Naive thymus-derived CD8-positive, alpha-beta T cell (primary cell): ENCODE measurements at regions of chr1 and their contacts with region 1.

Region 1: DNA sequence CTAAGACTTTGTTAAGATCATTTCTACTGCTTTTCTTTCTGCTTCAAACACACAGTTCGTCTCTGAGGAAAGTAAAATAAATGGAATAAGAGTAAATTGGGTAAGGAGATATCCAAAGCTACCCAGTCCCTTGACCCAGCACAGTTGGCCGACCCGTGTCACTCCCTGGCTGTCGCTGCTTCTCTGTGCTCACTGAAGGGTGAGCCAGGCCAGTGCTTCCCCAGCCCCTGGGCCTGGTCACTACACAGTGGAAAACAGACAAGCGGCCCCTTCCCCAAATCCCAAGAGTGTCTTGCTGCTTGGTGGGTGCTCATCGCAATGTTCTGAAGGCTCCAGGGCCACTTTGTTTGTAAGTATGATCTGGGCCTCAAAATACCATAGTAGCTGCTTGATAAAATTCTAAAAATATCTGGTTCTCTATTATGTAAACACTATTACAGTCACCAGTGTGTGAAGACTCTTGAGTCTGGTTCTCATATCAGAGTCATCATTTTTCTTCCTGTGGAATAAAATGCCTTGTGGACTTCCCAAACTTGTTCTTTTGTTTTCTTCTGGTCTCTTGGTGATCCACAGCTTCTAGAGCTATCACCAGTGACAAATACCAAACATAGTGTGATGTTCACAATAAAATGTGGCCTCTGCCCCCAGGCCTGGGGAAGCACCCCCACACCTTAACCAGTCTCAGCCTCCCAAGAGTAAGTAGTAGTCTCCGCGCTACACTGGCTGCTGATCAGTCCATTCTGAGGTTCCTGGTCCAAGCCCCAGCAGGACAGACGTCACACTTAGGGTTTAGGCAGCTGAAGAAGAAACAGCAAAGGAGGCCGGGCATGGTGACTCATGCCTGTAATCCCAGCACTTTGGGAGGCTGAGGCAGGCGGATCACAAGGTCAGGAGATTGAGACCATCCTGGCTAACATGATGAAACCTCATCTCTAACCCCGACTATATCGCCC is 106.2 kb downstream of the DHRS3 start:
- DNase-seq: no peak
- ATAC-seq: no peak
- H3K4me3 Mint-ChIP-seq: peak overlapping the region; percentile 52 to 92 (median 78)
- H3K27ac Mint-ChIP-seq: peak overlapping the region; percentile 97 to 99 (median 98)
- H3K4me1 Mint-ChIP-seq: peaks cover 22 to 52% (median 43%) of the 10 kb centered on the region in 4 donors
- H3K27me3 Mint-ChIP-seq: no peaks in the 10 kb centered on the region

Region 2: DNA sequence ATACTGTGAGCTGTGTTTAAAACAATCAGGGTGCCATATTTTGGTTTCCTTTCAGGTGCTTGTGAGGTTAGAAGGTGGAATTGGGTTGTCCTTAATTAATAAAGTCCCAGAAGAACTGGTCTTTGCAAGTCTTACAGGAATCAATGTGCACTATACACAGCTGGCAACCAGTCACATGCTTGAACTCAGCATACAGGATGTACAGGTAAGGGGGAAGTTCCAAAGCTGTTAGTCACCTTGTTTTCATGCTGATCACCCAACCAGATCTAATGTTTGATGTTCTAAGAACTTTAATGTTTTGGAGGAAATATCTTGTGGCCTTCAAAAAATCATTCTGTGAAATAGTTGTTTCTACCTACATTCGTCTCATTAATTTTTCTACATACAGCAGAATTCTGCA is 125.7 kb before region 1 on chr1:
- POLR2A ChIA-PET with region 1: no interaction called
- DNase-seq: peak in 3 of 10 donors; percentile 5 to 15 (median 12)
- ATAC-seq: peak; percentile 95 to 99
- H3K4me3 Mint-ChIP-seq: peak overlapping the region in 8 of 10 donors; percentile 31 to 81 (median 53)
- H3K27ac Mint-ChIP-seq: peak overlapping the region; percentile 17 to 99 (median 79)
- H3K4me1 Mint-ChIP-seq: peaks cover 16 to 50% (median 35%) of the 10 kb centered on the region in 4 donors
- H3K27me3 Mint-ChIP-seq: no peaks in the 10 kb centered on the region

Region 3: GRCh38 chr1:12448746-12449177 is 63.0 kb before region 1 on chr1:
- POLR2A ChIA-PET with region 1: interaction called, 10 read pairs
- DNase-seq: no peak
- ATAC-seq: no peak
- H3K4me3 Mint-ChIP-seq: peak overlapping the region in 9 of 10 donors; percentile 76 to 88 (median 84)
- H3K27ac Mint-ChIP-seq: peak overlapping the region; percentile 60 to 100 (median 94)
- H3K4me1 Mint-ChIP-seq: peaks cover 41 to 87% (median 80%) of the 10 kb centered on the region in 4 donors
- H3K27me3 Mint-ChIP-seq: no peaks in the 10 kb centered on the region

Region 4: GRCh38 chr1:12472798-12473551 is 38.8 kb before region 1 on chr1:
- POLR2A ChIA-PET with region 1: interaction called, 39 read pairs
- DNase-seq: peak in 9 of 10 donors; percentile 25 to 79 (median 54)
- ATAC-seq: peak; percentile 75 to 79
- H3K4me3 Mint-ChIP-seq: peak overlapping the region; percentile 56 to 86 (median 78)
- H3K27ac Mint-ChIP-seq: peak overlapping the region; percentile 90 to 97 (median 96)
- H3K4me1 Mint-ChIP-seq: peaks cover 36 to 91% (median 86%) of the 10 kb centered on the region in 4 donors
- H3K27me3 Mint-ChIP-seq: no peaks in the 10 kb centered on the region

Region 5: GRCh38 chr1:12496154-12496913 is 15.5 kb before region 1 on chr1:
- POLR2A ChIA-PET with region 1: interaction called, 11 read pairs
- DNase-seq: no peak
- ATAC-seq: no peak
- H3K4me3 Mint-ChIP-seq: peak overlapping the region in 2 of 10 donors; percentile 41 to 43
- H3K27ac Mint-ChIP-seq: peak overlapping the region in 6 of 10 donors; percentile 7 to 71 (median 38)
- H3K4me1 Mint-ChIP-seq: peaks cover 6 to 17% (median 11%) of the 10 kb centered on the region in 4 donors
- H3K27me3 Mint-ChIP-seq: no peaks in the 10 kb centered on the region

Region 6: GRCh38 chr1:12619792-12620487 is 108.1 kb after region 1 on chr1:
- POLR2A ChIA-PET with region 1: interaction called, 40 read pairs
- DNase-seq: peak; percentile 58 to 84 (median 75)
- ATAC-seq: peak; percentile 26 to 27
- H3K4me3 Mint-ChIP-seq: peak overlapping the region; percentile 96 to 100 (median 99)
- H3K27ac Mint-ChIP-seq: peak overlapping the region in 9 of 10 donors; percentile 26 to 97 (median 82)
- H3K4me1 Mint-ChIP-seq: peaks cover 21 to 52% (median 41%) of the 10 kb centered on the region in 4 donors
- H3K27me3 Mint-ChIP-seq: peaks cover 0 to 7% (median 0%) of the 10 kb centered on the region in 5 donors